Activated T-helper 2 cell treated with anti-CD3 and anti-CD28 coated beads, Interferon-gamma antibody, Interleukin-2, Interleukin-4, amounts not matched to agents 10 μg/mL and 5 μg/mL and 100 μg/mL, durations not matched to agents 14 hours and 24 hours and 36 hours (primary cell): ENCODE measurements at regions of chr1 and their contacts with region 1.

Region 1: GRCh38 chr1:168572633-168573032 is 3.8 kb upstream of the XCL1 start:
- DNase-seq: no peak
- H3K4me3 Mint-ChIP-seq: no peak overlapping the region
- H3K27ac Mint-ChIP-seq: peak overlapping the region; percentile 2
- H3K4me1 Mint-ChIP-seq: peaks cover 33% of the 10 kb centered on the region
- H3K27me3 Mint-ChIP-seq: peaks cover 9% of the 10 kb centered on the region

Region 2: DNA sequence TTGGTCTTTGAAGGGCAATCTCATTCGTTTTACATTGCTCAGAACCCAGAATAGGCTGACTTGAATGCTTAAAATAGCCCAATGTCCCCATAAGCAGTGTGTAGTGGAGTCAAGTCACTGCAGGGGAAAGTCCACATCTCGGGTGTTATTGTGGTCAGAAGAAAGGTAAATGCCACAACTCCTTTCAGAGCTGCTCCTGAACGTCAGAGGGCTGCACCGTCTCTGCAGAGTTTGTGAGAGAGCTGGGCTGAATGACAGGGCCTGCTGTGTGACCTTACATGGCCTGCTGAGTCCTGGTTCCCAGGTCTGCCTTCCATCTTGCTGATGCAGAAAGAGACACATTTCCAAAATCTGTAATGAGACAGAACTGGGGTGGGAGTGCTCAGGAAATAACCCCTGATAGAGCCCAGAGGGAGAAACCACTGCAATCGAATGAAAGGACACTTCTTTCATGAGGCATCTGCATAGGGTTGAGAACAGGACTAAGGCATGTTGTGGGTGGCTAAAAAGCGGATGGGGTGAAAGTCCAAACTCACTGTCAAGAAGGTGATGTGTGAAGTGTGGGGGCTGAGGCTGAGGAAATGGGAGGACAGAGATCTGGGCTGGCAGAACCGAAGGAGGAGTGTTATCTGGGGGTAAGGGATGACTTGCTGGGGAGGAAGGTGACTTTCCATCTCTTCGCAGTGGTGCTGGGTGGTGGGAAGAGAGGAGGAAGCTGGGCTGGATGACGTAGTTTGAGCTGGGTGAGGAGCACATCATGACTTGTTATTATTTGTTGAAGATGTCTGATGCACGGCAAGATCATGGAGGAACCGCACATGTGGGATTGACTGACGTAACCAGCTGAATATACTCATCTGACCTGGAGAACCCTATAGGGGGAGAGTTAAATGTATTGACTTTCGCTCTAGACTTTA is 62.5 kb before region 1 on chr1:
- intact Hi-C with region 1: loop called (anchors 5 kb)
- DNase-seq: no peak
- H3K4me3 Mint-ChIP-seq: peak overlapping the region; percentile 1
- H3K27ac Mint-ChIP-seq: peak overlapping the region; percentile 87
- H3K4me1 Mint-ChIP-seq: peaks cover 86% of the 10 kb centered on the region
- H3K27me3 Mint-ChIP-seq: no peaks in the 10 kb centered on the region

Region 3: DNA sequence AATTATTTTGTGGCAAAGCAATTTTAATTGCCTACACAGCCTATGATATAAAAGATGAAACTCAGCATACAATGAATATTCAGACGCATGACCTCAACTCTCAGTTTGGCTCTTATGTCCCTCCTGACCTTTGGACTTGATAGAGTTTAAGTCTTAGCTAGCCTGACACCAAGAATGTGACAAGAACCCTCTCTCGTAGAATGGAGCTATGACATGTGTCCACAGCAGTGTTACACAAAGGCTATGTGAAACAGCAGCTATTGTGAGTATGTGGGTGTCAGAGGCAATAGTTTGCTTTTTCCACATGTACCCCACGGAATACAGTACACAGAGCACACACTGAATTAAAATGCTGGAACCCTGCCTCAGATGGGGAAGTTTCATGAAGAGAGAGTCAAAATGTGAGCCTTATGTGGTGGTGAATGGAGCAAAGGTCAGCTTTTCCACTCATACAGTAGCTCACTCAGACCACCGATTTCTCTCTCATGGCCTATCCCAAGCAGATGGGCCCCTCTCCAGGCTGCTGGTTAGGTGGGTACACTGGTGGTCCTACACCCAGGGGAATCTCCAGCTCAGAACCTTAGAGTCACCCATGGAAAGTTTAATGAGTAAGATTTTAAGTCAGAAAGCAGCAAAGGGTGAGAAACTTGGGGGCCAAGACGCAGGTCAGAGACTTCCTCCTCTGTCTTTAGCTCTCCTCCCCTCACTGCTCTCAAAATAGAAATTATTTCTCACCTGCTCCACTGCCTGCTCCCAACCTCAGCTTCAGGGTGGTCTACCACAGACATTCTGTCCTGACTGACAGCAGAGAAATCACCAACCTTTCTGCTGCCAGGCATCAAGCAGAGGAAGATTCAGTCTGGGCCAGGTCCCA is 18.7 kb before region 1 on chr1:
- intact Hi-C with region 1: loop called (anchors 2 kb)
- DNase-seq: no peak
- H3K4me3 Mint-ChIP-seq: no peak overlapping the region
- H3K27ac Mint-ChIP-seq: peak overlapping the region; percentile 67
- H3K4me1 Mint-ChIP-seq: peaks cover 45% of the 10 kb centered on the region
- H3K27me3 Mint-ChIP-seq: no peaks in the 10 kb centered on the region